CD14-positive monocyte (primary cell): ENCODE measurements at regions of chr17 and their contacts with region 1.

Region 1: GRCh38 chr17:19362277-19363113 is at the start of gene B9D1:
- DNase-seq: peak; percentile 85 to 91 (median 88)
- H3K4me3 ChIP-seq: peak within 1 kb of the TSS; percentile 55 to 77 (median 71)
- H3K4me3 Mint-ChIP-seq: peak within 1 kb of the TSS; percentile 88 to 94
- H3K27ac ChIP-seq: peak within 1 kb of the TSS in 1 of 2 donors; percentile 20
- H3K27ac Mint-ChIP-seq: peak within 1 kb of the TSS; percentile 74 to 95 (median 90)
- H3K4me1 ChIP-seq: peaks cover 10 to 13% of the 10 kb centered on the region in 2 donors
- H3K4me1 Mint-ChIP-seq: peaks cover 13% of the 10 kb centered on the region
- H3K27me3 ChIP-seq: peaks cover 0 to 29% of the 10 kb centered on the region in 2 donors
- H3K27me3 Mint-ChIP-seq: peaks cover 18 to 48% (median 39%) of the 10 kb centered on the region in 3 donors
- CTCF ChIP-seq: peak; percentile 96
- polyA plus RNA-seq, gene B9D1: 1.0 TPM in 1 of 3 donors, not detected in the others

Region 2: GRCh38 chr17:19327039-19327776 is 35.3 kb before region 1 on chr17:
- intact Hi-C with region 1: no loop called
- DNase-seq: no peak
- H3K4me3 ChIP-seq: no peak overlapping the region
- H3K4me3 Mint-ChIP-seq: peak overlapping the region in 1 of 2 donors; percentile 49
- H3K27ac ChIP-seq: no peak overlapping the region
- H3K27ac Mint-ChIP-seq: peak overlapping the region in 1 of 7 donors; percentile 58
- H3K4me1 ChIP-seq: no peaks in the 10 kb centered on the region
- H3K4me1 Mint-ChIP-seq: no peaks in the 10 kb centered on the region
- H3K27me3 ChIP-seq: peaks cover 8 to 58% of the 10 kb centered on the region in 2 donors
- H3K27me3 Mint-ChIP-seq: peaks cover 37 to 72% (median 58%) of the 10 kb centered on the region in 3 donors
- CTCF ChIP-seq: no peak

Region 3: DNA sequence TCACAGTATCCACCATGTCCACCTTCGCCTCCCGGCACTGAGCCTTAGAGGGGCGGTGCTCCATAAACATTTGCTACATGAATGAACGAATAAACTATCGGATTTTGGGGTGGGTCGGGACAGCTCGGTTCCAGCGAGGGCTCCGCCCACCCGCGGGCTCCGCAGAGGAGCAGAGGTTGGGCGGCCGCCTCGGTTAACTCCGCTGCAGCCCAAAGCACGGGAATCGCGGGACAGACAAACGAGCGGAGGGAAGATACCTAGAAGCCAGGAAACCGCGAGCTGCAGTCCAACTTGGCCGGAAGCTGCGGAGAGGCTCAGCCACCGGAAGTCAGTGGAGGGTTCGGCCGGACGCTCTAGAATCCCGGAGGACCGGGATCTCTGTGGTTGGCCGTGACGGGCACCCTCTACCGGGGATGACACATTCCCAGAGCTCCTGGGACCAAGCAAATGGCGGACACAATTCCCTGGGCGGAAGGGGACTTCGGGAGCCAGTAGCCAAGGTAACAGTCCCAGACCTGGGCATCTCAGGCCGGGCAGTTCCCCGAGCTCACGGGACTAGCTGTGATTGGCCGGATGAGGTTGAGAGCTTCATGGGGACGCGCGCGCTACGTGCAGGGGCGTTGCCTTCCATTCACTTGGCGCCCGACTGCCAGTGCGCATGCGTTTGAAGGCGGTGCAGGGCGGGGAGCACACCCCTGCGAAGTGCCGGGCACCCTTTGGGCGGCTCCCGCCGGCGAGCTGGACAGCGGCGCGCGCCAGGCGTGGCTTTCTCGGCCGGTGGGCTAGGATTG is 15.3 kb after region 1 on chr17:
- intact Hi-C with region 1: loop called in 1 of 2 experiments (anchors 2 kb)
- DNase-seq: peak; percentile 98 to 99 (median 99)
- H3K4me3 ChIP-seq: peak overlapping the region; percentile 54 to 90 (median 88)
- H3K4me3 Mint-ChIP-seq: peak overlapping the region; percentile 98 to 99
- H3K27ac ChIP-seq: peak overlapping the region; percentile 94 to 96
- H3K27ac Mint-ChIP-seq: peak overlapping the region; percentile 99 to 100 (median 100)
- H3K4me1 ChIP-seq: peaks cover 29 to 35% of the 10 kb centered on the region in 2 donors
- H3K4me1 Mint-ChIP-seq: peaks cover 27% of the 10 kb centered on the region
- H3K27me3 ChIP-seq: no peaks in the 10 kb centered on the region
- H3K27me3 Mint-ChIP-seq: peaks cover 0 to 5% (median 3%) of the 10 kb centered on the region in 3 donors
- CTCF ChIP-seq: no peak

Region 4: GRCh38 chr17:19418251-19418992 is 55.9 kb after region 1 on chr17:
- intact Hi-C with region 1: loop called in 1 of 2 experiments (anchors 10 kb)
- DNase-seq: peak; percentile 68 to 86 (median 72)
- H3K4me3 ChIP-seq: no peak overlapping the region
- H3K4me3 Mint-ChIP-seq: no peak overlapping the region
- H3K27ac ChIP-seq: no peak overlapping the region
- H3K27ac Mint-ChIP-seq: peak overlapping the region in 4 of 7 donors; percentile 11 to 77 (median 36)
- H3K4me1 ChIP-seq: peaks cover 3 to 7% of the 10 kb centered on the region in 2 donors
- H3K4me1 Mint-ChIP-seq: peaks cover 14% of the 10 kb centered on the region
- H3K27me3 ChIP-seq: no peaks in the 10 kb centered on the region
- H3K27me3 Mint-ChIP-seq: peaks cover under 1 to 8% (median 2%) of the 10 kb centered on the region in 3 donors
- CTCF ChIP-seq: peak; percentile 46

Region 5: GRCh38 chr17:19447085-19447583 is 84.6 kb after region 1 on chr17:
- intact Hi-C with region 1: loop called (anchors 1 kb)
- DNase-seq: peak; percentile 58 to 75 (median 62)
- H3K4me3 ChIP-seq: no peak overlapping the region
- H3K4me3 Mint-ChIP-seq: no peak overlapping the region
- H3K27ac ChIP-seq: no peak overlapping the region
- H3K27ac Mint-ChIP-seq: peak overlapping the region in 3 of 7 donors; percentile 61 to 67 (median 65)
- H3K4me1 ChIP-seq: peaks cover 7 to 18% of the 10 kb centered on the region in 2 donors
- H3K4me1 Mint-ChIP-seq: peaks cover 24% of the 10 kb centered on the region
- H3K27me3 ChIP-seq: peaks cover 3 to 5% of the 10 kb centered on the region in 2 donors
- H3K27me3 Mint-ChIP-seq: peaks cover 7 to 15% (median 11%) of the 10 kb centered on the region in 3 donors
- CTCF ChIP-seq: peak; percentile 95

Region 6: GRCh38 chr17:19648475-19649406 is 286.2 kb after region 1 on chr17 and contains the start of gene ALDH3A2:
- intact Hi-C with region 1: loop called (anchors 10 kb)
- DNase-seq: peak; percentile 87 to 88 (median 87)
- H3K4me3 ChIP-seq: peak within 1 kb of the TSS; percentile 49 to 89 (median 82)
- H3K4me3 Mint-ChIP-seq: peak within 1 kb of the TSS; percentile 98 to 99
- H3K27ac ChIP-seq: peak within 1 kb of the TSS; percentile 98 to 99
- H3K27ac Mint-ChIP-seq: peak within 1 kb of the TSS; percentile 98 to 100 (median 99)
- H3K4me1 ChIP-seq: peaks cover 28 to 55% of the 10 kb centered on the region in 2 donors
- H3K4me1 Mint-ChIP-seq: peaks cover 53% of the 10 kb centered on the region
- H3K27me3 ChIP-seq: no peaks in the 10 kb centered on the region
- H3K27me3 Mint-ChIP-seq: peaks cover 0 to 1% (median 0%) of the 10 kb centered on the region in 3 donors
- CTCF ChIP-seq: peak; percentile 3
- polyA plus RNA-seq, gene ALDH3A2: 22.5 to 58.0 (median 50.3) TPM

Region 7: GRCh38 chr17:19766422-19767270 is 404.2 kb after region 1 on chr17:
- intact Hi-C with region 1: loop called (anchors 5 kb)
- DNase-seq: peak; percentile 53 to 67 (median 65)
- H3K4me3 ChIP-seq: no peak overlapping the region
- H3K4me3 Mint-ChIP-seq: no peak overlapping the region
- H3K27ac ChIP-seq: no peak overlapping the region
- H3K27ac Mint-ChIP-seq: no peak overlapping the region
- H3K4me1 ChIP-seq: no peaks in the 10 kb centered on the region
- H3K4me1 Mint-ChIP-seq: peaks cover 13% of the 10 kb centered on the region
- H3K27me3 ChIP-seq: no peaks in the 10 kb centered on the region
- H3K27me3 Mint-ChIP-seq: peaks cover 3 to 5% (median 4%) of the 10 kb centered on the region in 3 donors
- CTCF ChIP-seq: peak; percentile 97